ENCODE measurements at regions of chr4 and their contacts with region 1.

Region 1: DNA sequence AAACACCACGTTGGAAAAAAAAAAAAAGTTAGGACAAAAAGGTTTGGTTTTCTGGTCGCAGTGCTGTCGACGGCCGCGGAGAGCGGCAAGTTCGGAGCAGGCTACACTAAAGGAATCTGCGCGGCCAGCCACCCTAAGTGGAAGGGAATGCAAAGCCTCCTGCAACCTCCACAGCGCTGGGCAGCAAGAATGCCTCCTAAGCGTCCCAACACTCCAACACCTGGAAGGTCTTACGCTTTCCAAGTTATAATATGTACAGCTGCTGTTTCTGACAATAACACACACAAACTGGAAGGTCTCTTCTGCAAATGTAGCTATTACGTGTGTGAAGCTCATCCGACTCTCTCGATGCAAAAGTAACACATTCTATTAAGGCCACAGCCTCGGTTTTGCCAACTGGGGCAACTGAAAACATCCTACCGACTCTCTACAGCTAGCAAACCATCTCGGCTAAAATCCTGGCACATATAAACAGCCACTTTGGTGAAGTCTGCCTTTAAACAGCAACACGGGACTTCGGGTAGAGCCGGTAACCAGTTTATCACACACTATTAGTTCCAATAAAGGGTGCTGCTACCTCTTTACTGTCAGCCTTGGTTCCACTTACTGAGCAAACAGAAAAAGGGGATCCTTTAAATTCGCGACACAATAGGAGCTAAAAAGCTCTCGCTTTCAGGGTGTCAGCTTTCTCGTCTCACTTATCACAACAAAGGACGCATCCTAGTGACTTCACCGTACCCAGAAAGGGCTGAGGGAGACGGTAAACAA is 895 bp downstream of the SMIM14 start:
- DNase-seq: peak in 28 of 35 experiments; percentile 2 to 61 (median 14)
- ATAC-seq: peak; percentile 17 to 42 (median 30)
- H3K4me3 ChIP-seq: peak overlapping the region; percentile 85 to 86
- H3K4me3 Mint-ChIP-seq: peak overlapping the region; percentile 90 to 93 (median 93)
- H3K27ac ChIP-seq: peak overlapping the region; percentile 68
- H3K27ac Mint-ChIP-seq: peak overlapping the region; percentile 90 to 95
- H3K4me1 ChIP-seq: peaks cover 8 to 19% of the 10 kb centered on the region in 2 experiments
- H3K4me1 Mint-ChIP-seq: peaks cover 42 to 49% (median 43%) of the 10 kb centered on the region in 3 donors
- H3K27me3 ChIP-seq: no peaks in the 10 kb centered on the region
- H3K27me3 Mint-ChIP-seq: no peaks in the 10 kb centered on the region

Region 2: DNA sequence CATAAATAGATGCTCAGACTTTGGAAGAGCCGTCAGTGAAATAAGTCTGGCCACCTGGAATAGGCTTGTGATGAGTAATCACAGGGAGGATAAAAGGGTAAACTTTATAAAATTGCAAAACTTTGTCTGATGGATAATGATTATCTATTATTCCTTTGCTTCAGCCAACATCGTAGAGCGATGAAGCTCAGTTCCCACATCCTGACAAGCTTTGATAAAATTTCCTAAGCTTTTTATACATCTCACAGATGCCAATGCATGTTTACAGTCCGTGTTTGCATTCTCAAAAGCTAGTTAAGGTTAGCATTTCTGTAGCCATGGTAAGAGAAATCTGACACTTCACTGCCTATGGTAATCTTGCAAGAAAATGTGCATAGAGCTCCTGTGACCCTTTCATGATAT is 95.2 kb before region 1 on chr4:
- CTCF ChIA-PET with region 1: no interaction called
- POLR2A ChIA-PET with region 1: interaction called in 1 of 2 experiments, 10 read pairs
- DNase-seq: no peak
- ATAC-seq: no peak
- H3K4me3 ChIP-seq: no peak overlapping the region
- H3K4me3 Mint-ChIP-seq: no peak overlapping the region
- H3K27ac ChIP-seq: no peak overlapping the region
- H3K27ac Mint-ChIP-seq: no peak overlapping the region
- H3K4me1 ChIP-seq: no peaks in the 10 kb centered on the region
- H3K4me1 Mint-ChIP-seq: no peaks in the 10 kb centered on the region
- H3K27me3 ChIP-seq: no peaks in the 10 kb centered on the region
- H3K27me3 Mint-ChIP-seq: no peaks in the 10 kb centered on the region

Region 3: DNA sequence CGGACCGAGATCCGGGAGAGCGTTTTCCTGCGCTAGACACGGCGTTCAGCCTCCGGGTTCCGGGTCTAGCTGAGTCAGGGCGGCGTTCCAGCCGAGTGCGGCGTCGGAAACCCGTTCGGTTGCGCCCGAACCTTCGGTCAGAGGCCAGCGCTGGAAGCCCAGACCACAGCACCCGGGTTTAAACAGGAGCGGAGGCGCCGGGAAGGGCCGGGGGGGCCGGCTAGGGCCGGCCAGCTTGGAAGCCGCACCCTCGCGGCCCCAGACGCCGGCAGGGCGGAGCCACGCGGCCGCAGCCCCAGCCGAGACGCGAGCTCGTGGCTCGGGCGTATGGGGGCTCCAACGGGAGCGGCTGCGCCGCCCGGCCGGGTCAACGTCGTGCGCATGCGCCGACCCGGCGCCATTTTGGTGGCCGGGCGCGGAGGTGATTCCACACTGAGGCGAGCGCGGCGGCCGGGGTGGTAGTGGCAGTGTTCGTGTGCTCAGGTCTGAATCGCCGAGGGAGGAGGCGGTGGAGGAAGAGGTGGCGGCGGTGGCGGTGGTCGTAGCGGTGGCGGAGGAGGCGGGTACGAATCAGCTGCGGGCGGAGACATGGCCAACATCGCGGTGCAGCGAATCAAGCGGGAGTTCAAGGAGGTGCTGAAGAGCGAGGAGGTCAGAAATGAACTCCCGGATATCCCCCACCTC is 60.1 kb after region 1 on chr4 and contains the start of gene UBE2K:
- CTCF ChIA-PET with region 1: interaction called, 5 to 12 read pairs
- POLR2A ChIA-PET with region 1: no interaction called
- DNase-seq: peak; percentile 76 to 93 (median 84)
- ATAC-seq: peak; percentile 91 to 93 (median 92)
- H3K4me3 ChIP-seq: peak within 1 kb of the TSS; percentile 91 to 100
- H3K4me3 Mint-ChIP-seq: peak within 1 kb of the TSS; percentile 96 to 98 (median 97)
- H3K27ac ChIP-seq: peak within 1 kb of the TSS; percentile 90
- H3K27ac Mint-ChIP-seq: peak within 1 kb of the TSS; percentile 96 to 97
- H3K4me1 ChIP-seq: peaks cover 16 to 25% of the 10 kb centered on the region in 2 experiments
- H3K4me1 Mint-ChIP-seq: peaks cover 43 to 52% (median 49%) of the 10 kb centered on the region in 3 donors
- H3K27me3 ChIP-seq: no peaks in the 10 kb centered on the region
- H3K27me3 Mint-ChIP-seq: no peaks in the 10 kb centered on the region
- total RNA-seq, gene UBE2K: 32.5 to 46.9 (median 44.0) TPM

Measured in T-cell (primary cell).